ENCODE measurements at regions of chr19 and their contacts with region 1.

Region 1: DNA sequence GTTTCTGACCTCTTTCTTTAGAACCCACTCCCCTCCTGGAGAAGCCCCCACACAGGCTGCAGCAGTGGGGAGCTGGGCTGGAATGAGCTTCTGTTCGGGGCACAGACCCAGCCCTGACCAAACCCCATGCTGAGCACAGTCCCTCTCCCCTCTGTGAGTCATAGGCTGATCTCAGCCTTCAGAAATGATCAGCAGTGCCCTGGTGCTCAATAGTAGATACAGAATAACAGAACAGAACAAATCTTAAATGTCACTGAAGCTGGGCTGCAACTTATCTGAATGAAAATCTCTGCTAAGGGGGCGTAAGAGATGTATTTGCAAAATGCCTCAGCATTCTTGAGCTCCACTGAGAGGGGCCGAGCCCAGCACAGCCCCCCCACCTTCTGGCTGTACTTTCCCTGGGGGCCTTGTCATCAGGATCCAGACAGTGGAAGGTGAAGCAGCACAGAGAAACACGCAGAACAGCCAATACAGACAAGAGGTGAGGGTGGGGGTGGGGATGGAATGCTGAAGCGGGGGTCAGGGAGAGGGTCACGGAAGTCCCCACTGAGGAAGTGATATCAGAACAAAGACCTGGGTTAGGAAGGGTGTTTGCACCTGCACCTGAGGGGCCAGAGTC is 9.9 kb downstream of the ZNF665 start:
- DNase-seq: no peak
- ATAC-seq: peak; percentile 86
- H3K4me3 ChIP-seq: no peak overlapping the region
- H3K27ac ChIP-seq: no peak overlapping the region
- H3K4me1 ChIP-seq: no peaks in the 10 kb centered on the region
- H3K27me3 ChIP-seq: no peaks in the 10 kb centered on the region
- CTCF ChIP-seq: no peak

Region 2: GRCh38 chr19:53157626-53158025 is 25.6 kb before region 1 on chr19:
- CTCF ChIA-PET with region 1: no interaction called
- POLR2A ChIA-PET with region 1: interaction called, 15 read pairs
- in situ Hi-C with region 1: no loop called
- intact Hi-C with region 1: no loop called
- DNase-seq: no peak
- ATAC-seq: peak; percentile 69
- H3K4me3 ChIP-seq: peak overlapping the region; percentile 52 to 84
- H3K27ac ChIP-seq: peak overlapping the region; percentile 75
- H3K4me1 ChIP-seq: peaks cover 5% of the 10 kb centered on the region; the same call in 1 of the 2 replicates
- H3K27me3 ChIP-seq: no peaks in the 10 kb centered on the region
- CTCF ChIP-seq: no peak